Prostate gland (tissue), 2 donors: ENCODE measurements at regions of chr14 and their contacts with region 1.

Region 1: DNA sequence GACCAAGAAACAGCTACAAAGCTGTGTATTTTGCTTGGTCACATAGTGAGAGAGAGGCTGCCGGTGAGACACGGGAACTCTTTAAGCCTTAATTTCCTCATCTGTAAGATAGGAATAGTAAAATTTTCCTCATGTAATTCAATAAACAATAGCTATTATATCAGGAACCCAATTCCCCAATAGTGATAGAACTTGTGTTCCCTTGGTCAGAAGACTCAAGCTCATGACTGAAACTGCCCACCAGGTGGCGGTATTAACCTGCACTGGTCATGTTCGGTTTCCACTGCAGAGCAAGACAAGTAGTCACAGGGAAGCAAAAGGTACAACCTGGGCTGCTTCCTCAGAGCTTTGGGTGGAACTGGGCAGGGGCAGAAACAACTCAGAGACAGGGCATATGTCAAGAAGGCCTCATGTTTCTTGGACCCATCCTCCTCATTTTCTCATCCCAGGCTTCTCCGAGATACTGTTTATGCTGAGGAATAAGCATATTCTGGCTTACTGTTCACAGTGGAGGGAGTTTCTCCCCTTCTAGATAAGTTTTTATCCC is 4.2 kb upstream of the AJUBA start:
- DNase-seq: peak; percentile 92
- H3K4me3 ChIP-seq: no peak overlapping the region
- H3K27ac ChIP-seq: no peak overlapping the region
- H3K4me1 ChIP-seq: no peaks in the 10 kb centered on the region
- H3K27me3 ChIP-seq: no peaks in the 10 kb centered on the region
- CTCF ChIP-seq: peak; percentile 70 to 96 (median 93)
- POLR2A ChIP-seq: no peak

Region 2: DNA sequence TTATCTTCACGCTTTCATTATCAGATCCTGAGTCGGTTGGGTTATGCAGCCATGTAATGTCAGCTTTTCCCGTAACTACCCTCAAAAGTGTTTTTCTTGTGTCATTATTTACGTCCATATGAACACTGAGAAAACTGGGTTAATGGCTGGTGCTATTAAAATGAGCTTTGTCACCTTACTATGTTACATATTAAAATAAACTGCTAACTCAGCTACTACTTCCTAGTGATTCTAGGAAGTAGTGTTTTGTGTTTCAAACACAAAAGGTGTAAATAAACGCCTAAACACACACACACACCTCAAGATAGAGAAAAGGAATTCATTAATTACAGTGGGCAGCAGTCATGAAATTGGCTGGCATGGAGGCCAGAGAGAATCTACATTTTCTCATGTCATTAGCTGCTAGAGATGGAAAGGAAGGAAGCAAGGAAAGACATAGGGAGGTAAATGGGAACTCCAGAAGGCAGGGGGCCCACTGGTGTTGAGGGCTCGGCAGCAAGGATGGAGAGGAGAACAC is 56.7 kb before region 1 on chr14:
- intact Hi-C with region 1: loop called (anchors 2 kb)
- DNase-seq: peak; percentile 15
- H3K4me3 ChIP-seq: peak overlapping the region; percentile 27 to 29
- H3K27ac ChIP-seq: peak overlapping the region; percentile 82 to 83
- H3K4me1 ChIP-seq: peaks cover 12% of the 10 kb centered on the region
- H3K27me3 ChIP-seq: no peaks in the 10 kb centered on the region
- CTCF ChIP-seq: no peak
- POLR2A ChIP-seq: no peak

Region 3: GRCh38 chr14:23057757-23058653 is 71.4 kb after region 1 on chr14:
- intact Hi-C with region 1: loop called (anchors 2 kb)
- DNase-seq: peak; percentile 85
- H3K4me3 ChIP-seq: peak overlapping the region; percentile 63 to 73
- H3K27ac ChIP-seq: peak overlapping the region; percentile 82 to 83
- H3K4me1 ChIP-seq: no peaks in the 10 kb centered on the region
- H3K27me3 ChIP-seq: no peaks in the 10 kb centered on the region
- CTCF ChIP-seq: peak; percentile 92 to 95 (median 94)
- POLR2A ChIP-seq: no peak